ENCODE measurements at regions of chr14 and their contacts with region 1.

Region 1: DNA sequence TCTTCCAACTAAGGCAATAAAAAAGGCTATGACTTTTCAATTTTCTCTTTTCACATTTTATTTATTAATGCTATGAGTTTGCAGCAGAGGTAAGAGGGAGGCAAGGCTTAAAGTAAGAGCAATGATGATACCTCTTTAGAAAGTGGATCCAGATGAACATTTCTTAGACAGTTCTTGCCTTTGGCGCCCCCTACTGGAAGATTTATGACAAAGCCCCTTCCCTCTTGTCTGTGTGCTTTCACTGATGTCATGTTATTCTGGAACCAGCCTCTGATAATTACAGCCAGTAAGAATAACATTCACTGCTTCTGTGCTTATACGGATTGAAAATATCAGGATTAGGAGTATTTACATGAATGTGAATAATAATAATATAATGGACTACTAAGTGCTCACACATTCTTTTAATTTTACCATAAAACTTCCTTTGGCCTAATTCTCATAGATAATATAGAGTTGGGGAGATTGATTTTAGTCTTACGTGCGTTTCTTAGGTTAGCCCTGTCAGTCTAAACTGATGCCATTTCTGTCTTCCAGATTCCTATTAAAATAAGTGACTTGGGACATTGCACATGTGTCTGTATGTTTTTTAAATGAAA is 1929.9 kb upstream of the SEL1L start:
- DNase-seq: peak; percentile 45
- ATAC-seq: no peak
- H3K4me3 Mint-ChIP-seq: no peak overlapping the region
- H3K27ac Mint-ChIP-seq: no peak overlapping the region
- H3K4me1 Mint-ChIP-seq: no peaks in the 10 kb centered on the region
- H3K27me3 Mint-ChIP-seq: no peaks in the 10 kb centered on the region

Region 2: DNA sequence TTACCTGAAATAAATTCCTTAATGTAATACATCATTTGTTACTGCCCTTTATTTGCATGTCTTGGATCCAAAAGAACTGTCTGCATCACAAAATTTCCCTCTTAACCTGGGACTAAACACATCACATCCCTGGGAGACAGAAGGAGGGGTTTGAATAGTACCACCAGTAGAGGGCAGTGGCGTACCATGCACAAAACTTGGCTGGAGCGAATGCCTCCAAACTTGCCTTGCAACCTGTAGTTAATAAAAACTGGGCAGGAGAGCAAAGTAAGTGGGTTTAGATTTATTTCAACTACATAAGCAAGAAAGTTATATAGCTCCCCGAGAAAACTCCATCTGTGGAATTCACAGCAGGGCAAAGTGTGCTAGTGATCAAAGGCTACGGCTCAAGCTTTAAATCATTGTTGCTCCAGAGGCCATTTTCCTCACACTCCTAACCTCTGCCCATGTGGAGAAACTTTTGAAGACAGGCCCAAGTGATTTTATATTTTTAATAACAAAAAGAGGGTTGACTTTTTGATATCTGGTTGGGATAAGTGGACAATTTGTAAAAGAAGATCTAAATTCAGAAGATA is 753.2 kb before region 1 on chr14:
- CTCF ChIA-PET with region 1: no interaction called
- POLR2A ChIA-PET with region 1: no interaction called
- intact Hi-C with region 1: loop called in 1 of 2 experiments (anchors 2 kb)
- DNase-seq: peak; percentile 69
- ATAC-seq: no peak
- H3K4me3 Mint-ChIP-seq: no peak overlapping the region
- H3K27ac Mint-ChIP-seq: no peak overlapping the region
- H3K4me1 Mint-ChIP-seq: no peaks in the 10 kb centered on the region
- H3K27me3 Mint-ChIP-seq: no peaks in the 10 kb centered on the region

Region 3: GRCh38 chr14:83300476-83301064 is 163.0 kb before region 1 on chr14:
- CTCF ChIA-PET with region 1: no interaction called
- POLR2A ChIA-PET with region 1: no interaction called
- intact Hi-C with region 1: loop called in 1 of 2 experiments (anchors 1 kb)
- DNase-seq: no peak
- ATAC-seq: no peak
- H3K4me3 Mint-ChIP-seq: no peak overlapping the region
- H3K27ac Mint-ChIP-seq: no peak overlapping the region
- H3K4me1 Mint-ChIP-seq: no peaks in the 10 kb centered on the region
- H3K27me3 Mint-ChIP-seq: no peaks in the 10 kb centered on the region

Region 4: GRCh38 chr14:83556746-83557460 is 93.3 kb after region 1 on chr14:
- CTCF ChIA-PET with region 1: no interaction called
- POLR2A ChIA-PET with region 1: no interaction called
- intact Hi-C with region 1: no loop called
- DNase-seq: no peak
- ATAC-seq: no peak
- H3K4me3 Mint-ChIP-seq: no peak overlapping the region
- H3K27ac Mint-ChIP-seq: no peak overlapping the region
- H3K4me1 Mint-ChIP-seq: no peaks in the 10 kb centered on the region
- H3K27me3 Mint-ChIP-seq: no peaks in the 10 kb centered on the region

Region 5: DNA sequence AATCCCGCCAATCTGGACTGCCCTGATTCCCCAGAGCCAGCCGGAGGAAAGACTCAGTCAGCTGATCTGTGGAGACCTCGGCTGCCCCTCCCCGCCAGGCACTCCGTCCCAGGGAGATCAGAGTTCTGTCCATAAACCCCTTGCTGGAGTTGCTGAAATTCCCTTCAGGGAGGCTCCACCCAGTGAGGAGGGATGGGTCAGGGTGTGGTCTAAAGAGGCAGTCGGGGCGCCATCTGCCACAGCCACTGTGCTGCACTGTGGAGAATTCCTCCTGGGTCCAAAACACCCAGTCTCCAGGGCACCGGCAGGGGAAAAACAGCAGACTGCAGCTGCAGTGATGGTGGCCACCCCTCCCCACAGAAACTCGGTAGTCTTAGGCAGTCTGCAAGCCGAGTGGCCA is 144.1 kb after region 1 on chr14:
- CTCF ChIA-PET with region 1: no interaction called
- POLR2A ChIA-PET with region 1: no interaction called
- intact Hi-C with region 1: no loop called
- DNase-seq: no peak
- ATAC-seq: no peak
- H3K4me3 Mint-ChIP-seq: no peak overlapping the region
- H3K27ac Mint-ChIP-seq: no peak overlapping the region
- H3K4me1 Mint-ChIP-seq: no peaks in the 10 kb centered on the region
- H3K27me3 Mint-ChIP-seq: no peaks in the 10 kb centered on the region